ENCODE measurements at regions of chr5 and their contacts with region 1.

Region 1: GRCh38 chr5:32916648-32917047 is 205.5 kb downstream of the NPR3 start:
- DNase-seq: peak in 1 of 2 donors; percentile 65
- H3K4me3 ChIP-seq: no peak overlapping the region
- H3K27ac ChIP-seq: no peak overlapping the region
- H3K4me1 ChIP-seq: no peaks in the 10 kb centered on the region
- H3K27me3 ChIP-seq: no peaks in the 10 kb centered on the region
- CTCF ChIP-seq: peak; percentile 25 to 61 (median 39)

Region 2: DNA sequence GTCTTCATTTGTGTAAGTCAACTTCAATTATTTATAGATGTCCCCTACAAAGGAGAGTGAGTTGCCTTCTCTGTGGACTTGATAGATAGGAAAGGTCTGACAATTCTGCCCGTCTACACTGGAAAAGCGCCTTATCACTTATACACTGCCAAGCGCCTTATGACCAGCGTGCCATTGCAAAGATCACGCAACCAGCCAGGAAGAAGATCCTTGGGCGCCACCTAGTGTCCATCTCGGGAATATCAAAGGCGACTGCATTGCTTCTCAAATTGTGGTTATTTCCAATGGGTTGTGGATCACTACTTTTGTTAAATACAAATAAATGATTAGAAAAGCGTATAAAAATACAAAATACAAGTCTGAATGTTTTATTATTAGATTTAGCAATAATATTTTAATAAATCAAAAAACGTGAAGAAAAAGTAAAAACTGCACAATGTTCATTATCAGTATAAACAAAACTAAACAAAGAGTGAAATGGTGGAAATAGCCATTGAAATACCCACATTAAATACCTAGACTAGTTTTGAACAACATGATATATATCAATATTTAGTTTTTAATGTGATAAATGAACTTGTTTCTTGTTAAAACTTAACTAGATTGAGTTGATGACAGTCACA is 303.5 kb before region 1 on chr5:
- intact Hi-C with region 1: loop called (anchors 10 kb)
- DNase-seq: peak; percentile 37 to 92
- H3K4me3 ChIP-seq: no peak overlapping the region
- H3K27ac ChIP-seq: peak overlapping the region; percentile 51 to 59
- H3K4me1 ChIP-seq: peaks cover 3 to 13% of the 10 kb centered on the region in 2 donors
- H3K27me3 ChIP-seq: no peaks in the 10 kb centered on the region
- CTCF ChIP-seq: peak; percentile 71 to 91 (median 85)

Measured in ascending aorta (tissue), 2 donors.